Panc1 (cell line): ENCODE measurements at regions of chr7 and their contacts with region 1.

Region 1: GRCh38 chr7:26216049-26216448 is 14.5 kb downstream of the CBX3 start:
- DNase-seq: no peak
- ATAC-seq: no peak
- H3K4me3 ChIP-seq: no peak overlapping the region
- H3K27ac ChIP-seq: no peak overlapping the region
- H3K4me1 ChIP-seq: peaks cover 8% of the 10 kb centered on the region; the same call in 1 of the 2 replicates
- H3K27me3 ChIP-seq: no peaks in the 10 kb centered on the region
- CTCF ChIP-seq: no peak

Region 2: DNA sequence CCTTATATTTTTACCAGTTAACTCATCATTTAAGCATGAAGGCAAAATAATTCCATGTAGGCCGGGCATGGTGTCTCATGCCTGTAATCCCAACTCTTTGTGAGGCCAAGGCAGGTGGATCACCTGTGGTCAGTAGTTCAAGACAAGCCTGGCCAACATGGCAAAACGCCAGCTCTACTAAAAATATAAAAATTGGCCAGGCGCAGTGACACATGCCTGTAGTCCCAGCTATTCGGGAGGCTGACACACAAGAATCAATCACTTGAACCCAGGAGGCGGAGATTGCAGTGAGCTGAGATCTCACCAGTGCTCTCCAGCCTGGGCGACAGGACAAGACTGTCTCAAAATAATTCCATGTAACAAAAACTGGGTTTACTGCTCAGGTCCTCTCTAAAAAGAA is 33.8 kb before region 1 on chr7:
- CTCF ChIA-PET with region 1: no interaction called
- POLR2A ChIA-PET with region 1: no interaction called
- in situ Hi-C with region 1: no loop called
- intact Hi-C with region 1: no loop called
- DNase-seq: no peak
- ATAC-seq: peak; percentile 27
- H3K4me3 ChIP-seq: no peak overlapping the region
- H3K27ac ChIP-seq: peak overlapping the region; percentile 4; the same call in 1 of the 2 replicates
- H3K4me1 ChIP-seq: peaks cover 50% of the 10 kb centered on the region
- H3K27me3 ChIP-seq: no peaks in the 10 kb centered on the region
- CTCF ChIP-seq: no peak

Region 3: GRCh38 chr7:26200444-26201246 is 15.4 kb before region 1 on chr7 and contains the start of gene HNRNPA2B1:
- CTCF ChIA-PET with region 1: interaction called, 4 read pairs
- POLR2A ChIA-PET with region 1: interaction called, 10 read pairs
- in situ Hi-C with region 1: no loop called
- intact Hi-C with region 1: no loop called
- DNase-seq: peak; percentile 99
- ATAC-seq: peak; percentile 80
- H3K4me3 ChIP-seq: peak within 1 kb of the TSS; percentile 97 to 98
- H3K27ac ChIP-seq: peak within 1 kb of the TSS; percentile 100
- H3K4me1 ChIP-seq: peaks cover 40% of the 10 kb centered on the region
- H3K27me3 ChIP-seq: no peaks in the 10 kb centered on the region
- CTCF ChIP-seq: no peak
- total RNA-seq, gene HNRNPA2B1: 819 TPM

Region 4: GRCh38 chr7:26237035-26237807 is 21.2 kb after region 1 on chr7:
- CTCF ChIA-PET with region 1: interaction called, 14 read pairs
- POLR2A ChIA-PET with region 1: no interaction called
- in situ Hi-C with region 1: no loop called
- intact Hi-C with region 1: no loop called
- DNase-seq: no peak
- ATAC-seq: peak; percentile 66
- H3K4me3 ChIP-seq: no peak overlapping the region
- H3K27ac ChIP-seq: no peak overlapping the region
- H3K4me1 ChIP-seq: no peaks in the 10 kb centered on the region
- H3K27me3 ChIP-seq: no peaks in the 10 kb centered on the region; the same call in 1 of the 2 replicates
- CTCF ChIP-seq: no peak

Region 5: GRCh38 chr7:26284995-26285632 is 69.1 kb after region 1 on chr7:
- CTCF ChIA-PET with region 1: interaction called, 7 read pairs
- POLR2A ChIA-PET with region 1: no interaction called
- in situ Hi-C with region 1: no loop called
- intact Hi-C with region 1: loop called (anchors 5 kb)
- DNase-seq: peak; percentile 54
- ATAC-seq: peak; percentile 95
- H3K4me3 ChIP-seq: no peak overlapping the region
- H3K27ac ChIP-seq: no peak overlapping the region
- H3K4me1 ChIP-seq: no peaks in the 10 kb centered on the region
- H3K27me3 ChIP-seq: no peaks in the 10 kb centered on the region
- CTCF ChIP-seq: peak; percentile 77

Region 6: GRCh38 chr7:26346611-26347203 is 130.7 kb after region 1 on chr7:
- CTCF ChIA-PET with region 1: no interaction called
- POLR2A ChIA-PET with region 1: no interaction called
- in situ Hi-C with region 1: no loop called
- intact Hi-C with region 1: no loop called
- DNase-seq: no peak
- ATAC-seq: peak; percentile 60
- H3K4me3 ChIP-seq: no peak overlapping the region
- H3K27ac ChIP-seq: no peak overlapping the region
- H3K4me1 ChIP-seq: no peaks in the 10 kb centered on the region
- H3K27me3 ChIP-seq: no peaks in the 10 kb centered on the region
- CTCF ChIP-seq: no peak